ENCODE measurements at regions of chr9 and their contacts with region 1.

Region 1: DNA sequence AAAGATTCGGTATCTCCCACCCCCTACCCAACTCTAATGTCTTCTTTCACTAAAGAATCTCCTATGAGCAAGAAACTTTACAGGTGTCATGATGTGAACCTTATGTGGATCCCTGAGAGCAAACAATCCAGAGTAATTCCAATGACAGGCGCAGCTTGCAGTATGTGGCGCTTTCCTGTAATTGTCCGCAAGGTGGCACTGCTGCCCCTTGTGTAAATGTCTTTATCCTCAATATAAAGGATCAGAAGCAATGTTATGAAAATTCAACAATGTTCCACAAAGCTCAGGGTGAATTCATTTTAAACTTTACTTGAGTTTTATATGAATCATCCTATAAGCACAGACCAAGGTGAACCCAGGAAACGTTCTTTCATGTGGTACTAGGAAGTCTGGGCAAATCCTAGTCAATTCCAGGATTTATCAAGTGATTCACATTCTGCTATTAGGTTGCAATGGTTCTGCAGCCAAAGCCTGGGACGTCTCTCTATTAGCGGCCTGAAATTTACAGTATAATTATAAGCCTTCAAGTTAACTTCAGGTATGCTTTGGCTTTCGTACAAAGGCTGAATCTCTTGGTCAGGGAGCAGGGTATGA is 113.7 kb downstream of the TRPM6 start:
- DNase-seq: peak; percentile 47
- H3K4me3 Mint-ChIP-seq: no peak overlapping the region
- H3K27ac Mint-ChIP-seq: no peak overlapping the region
- H3K4me1 Mint-ChIP-seq: peaks cover 20% of the 10 kb centered on the region
- H3K27me3 Mint-ChIP-seq: peaks cover 10% of the 10 kb centered on the region

Region 2: DNA sequence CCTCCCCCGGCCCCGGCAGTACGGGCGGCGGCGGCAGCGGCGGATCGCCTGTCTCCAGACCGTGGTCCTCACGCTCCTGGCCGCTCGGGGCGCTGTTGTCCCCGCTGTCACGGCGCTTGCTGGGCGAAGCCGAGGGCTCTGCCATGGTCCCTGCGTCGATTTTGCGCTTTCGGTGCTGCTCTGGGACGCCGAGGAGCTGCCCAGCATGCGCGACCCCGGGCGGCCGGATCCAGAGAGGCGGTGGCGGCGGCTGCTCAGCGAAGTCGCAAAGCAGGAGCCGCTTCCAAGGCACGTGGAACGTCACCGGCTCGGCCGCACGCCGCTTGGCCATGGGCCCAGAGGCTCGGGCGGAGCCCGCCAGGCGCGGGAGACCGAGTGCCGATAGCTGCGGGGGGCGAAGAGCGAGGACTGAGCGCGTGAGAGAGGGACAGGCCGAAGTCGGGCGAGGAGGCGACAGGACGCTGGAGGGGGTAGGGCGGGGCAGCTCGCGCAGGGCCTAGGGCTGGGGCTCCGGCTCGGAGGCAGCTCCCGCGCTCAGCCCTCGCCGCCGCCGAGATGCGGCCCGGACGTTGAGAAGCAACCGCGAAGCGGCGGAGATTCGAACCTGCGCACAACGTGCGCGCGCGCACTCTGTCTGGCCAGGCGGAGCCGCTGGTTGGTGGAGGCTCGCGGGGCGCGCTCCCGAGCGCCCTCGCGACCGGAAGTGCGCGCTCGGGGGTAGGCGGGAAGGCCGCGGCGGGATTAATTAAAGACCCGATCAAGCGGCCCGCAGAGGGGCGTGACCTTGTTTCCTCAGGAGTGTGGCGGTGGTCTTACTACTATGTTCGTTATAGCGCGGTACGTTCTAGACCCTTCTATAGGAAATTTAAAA is 178.5 kb after region 1 on chr9 and contains the start of gene C9orf40:
- intact Hi-C with region 1: loop called (anchors 1 kb)
- DNase-seq: peak; percentile 86
- H3K4me3 Mint-ChIP-seq: peak within 1 kb of the TSS; percentile 98
- H3K27ac Mint-ChIP-seq: peak within 1 kb of the TSS; percentile 99
- H3K4me1 Mint-ChIP-seq: peaks cover 44% of the 10 kb centered on the region
- H3K27me3 Mint-ChIP-seq: no peaks in the 10 kb centered on the region
- total RNA-seq, gene C9orf40: 18.1 and 18.3 TPM in 2 replicates

Region 3: DNA sequence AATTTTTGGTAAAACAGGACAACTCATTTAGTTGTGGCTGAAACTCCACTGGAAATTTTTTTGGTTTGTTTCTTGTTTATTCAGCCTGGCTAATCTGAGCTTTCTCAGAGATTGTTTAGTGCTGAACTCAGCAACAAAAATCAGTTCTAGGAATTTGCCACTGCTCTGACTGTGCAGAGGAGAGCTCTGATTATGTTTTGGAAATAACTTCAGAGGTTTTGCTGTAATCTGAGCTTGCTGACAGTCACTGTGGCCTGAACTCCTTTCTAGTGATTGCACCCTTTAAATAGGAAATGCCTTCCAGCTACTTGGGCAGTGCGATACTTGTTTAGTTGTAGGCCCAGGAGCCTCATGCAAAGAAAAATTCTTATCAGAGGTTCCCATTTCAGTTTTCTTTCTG is 374.6 kb after region 1 on chr9:
- intact Hi-C with region 1: loop called (anchors 2 kb)
- DNase-seq: peak; percentile 37
- H3K4me3 Mint-ChIP-seq: peak overlapping the region; percentile 62
- H3K27ac Mint-ChIP-seq: peak overlapping the region; percentile 87
- H3K4me1 Mint-ChIP-seq: peaks cover 79% of the 10 kb centered on the region
- H3K27me3 Mint-ChIP-seq: no peaks in the 10 kb centered on the region

Region 4: GRCh38 chr9:75238311-75238978 is 464.5 kb after region 1 on chr9:
- intact Hi-C with region 1: loop called (anchors 1 kb)
- DNase-seq: peak; percentile 10
- H3K4me3 Mint-ChIP-seq: no peak overlapping the region
- H3K27ac Mint-ChIP-seq: no peak overlapping the region
- H3K4me1 Mint-ChIP-seq: no peaks in the 10 kb centered on the region
- H3K27me3 Mint-ChIP-seq: peaks cover 4% of the 10 kb centered on the region